IMR-90 (cell line): ENCODE measurements at regions of chr11 and their contacts with region 1.

Region 1: GRCh38 chr11:27485930-27486773 is 13.6 kb upstream of the LGR4 start:
- DNase-seq: peak; percentile 61
- ATAC-seq: peak; percentile 81; the same call in 1 of the 2 replicates
- H3K4me3 ChIP-seq: no peak overlapping the region
- H3K27ac ChIP-seq: no peak overlapping the region
- H3K4me1 ChIP-seq: no peaks in the 10 kb centered on the region
- H3K27me3 ChIP-seq: no peaks in the 10 kb centered on the region
- CTCF ChIP-seq: peak; percentile 99
- POLR2A ChIP-seq: peak; percentile 36; the same call in 1 of the 2 replicates
- RAD21 ChIP-seq: peak; percentile 98

Region 2: DNA sequence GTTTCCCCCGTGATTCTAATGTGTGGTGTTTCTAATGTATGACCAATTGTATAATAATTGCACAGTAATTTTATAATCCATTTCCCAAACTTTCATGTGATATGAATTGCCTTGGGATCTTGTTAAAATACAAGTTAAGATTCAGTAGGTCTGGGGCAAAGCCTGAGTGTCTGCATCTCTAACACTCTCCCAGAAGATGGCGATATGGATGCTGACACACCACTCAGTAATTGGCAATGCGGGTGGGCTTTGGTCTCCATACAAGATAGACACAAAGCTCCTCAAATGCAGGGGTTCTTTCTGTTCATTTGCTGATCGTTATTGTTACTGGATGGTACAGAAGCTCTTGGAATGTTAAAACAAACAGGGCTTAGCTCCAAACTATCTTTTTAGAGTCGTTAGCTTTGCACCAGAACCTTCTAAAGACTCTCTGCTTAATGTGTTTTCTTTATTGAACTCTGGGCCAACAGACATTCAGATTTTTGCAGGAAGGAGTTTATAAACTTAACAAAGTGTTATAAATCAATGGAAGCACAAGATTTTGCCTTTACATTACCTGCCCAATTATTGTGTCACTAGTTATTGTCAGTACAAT is 1199.6 kb before region 1 on chr11:
- CTCF ChIA-PET with region 1: no interaction called
- POLR2A ChIA-PET with region 1: no interaction called
- dilution Hi-C with region 1: no loop called
- in situ Hi-C with region 1: no loop called
- intact Hi-C with region 1: loop called (anchors 10 kb)
- DNase-seq: peak; percentile 37
- ATAC-seq: peak; percentile 83
- H3K4me3 ChIP-seq: no peak overlapping the region; the same call in 1 of the 2 replicates
- H3K27ac ChIP-seq: no peak overlapping the region
- H3K4me1 ChIP-seq: no peaks in the 10 kb centered on the region
- H3K27me3 ChIP-seq: no peaks in the 10 kb centered on the region
- CTCF ChIP-seq: peak; percentile 44
- POLR2A ChIP-seq: no peak
- RAD21 ChIP-seq: no peak

Region 3: DNA sequence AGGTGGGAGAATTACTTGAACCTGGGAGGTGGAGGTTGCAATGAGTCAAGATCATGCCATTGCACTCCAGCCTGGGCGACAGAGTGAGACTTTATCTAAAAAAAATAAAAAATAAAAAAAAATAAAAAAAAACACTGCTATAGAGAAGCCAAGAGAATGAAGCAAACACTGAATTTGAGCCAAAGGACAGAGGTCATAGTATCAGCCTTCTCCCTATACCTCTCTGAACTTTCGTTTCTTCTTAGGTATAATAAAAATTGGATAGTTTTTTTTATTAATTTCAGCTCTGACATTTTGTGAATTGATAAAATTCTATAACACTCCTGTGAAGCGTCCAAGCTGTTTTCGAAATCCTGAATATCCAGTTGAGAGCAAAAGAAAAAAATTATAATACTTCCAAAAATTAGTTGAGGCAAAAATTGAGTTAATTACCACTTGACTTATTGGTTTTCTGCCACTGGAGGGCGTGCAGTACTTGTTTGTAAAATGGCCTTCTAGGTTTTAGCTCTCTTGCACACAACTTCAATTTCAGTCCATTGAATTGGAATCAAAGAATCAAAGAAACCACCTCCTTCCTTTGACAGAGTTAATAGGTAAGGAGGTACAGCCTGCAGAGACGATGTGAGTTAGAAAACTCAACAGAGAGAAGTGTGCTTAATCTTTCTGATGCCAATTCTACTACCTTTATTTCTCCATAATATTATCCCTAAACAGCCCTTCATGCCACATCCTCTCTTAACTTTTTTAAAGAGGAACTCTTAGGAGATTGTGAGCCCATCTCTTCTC is 302.3 kb before region 1 on chr11:
- CTCF ChIA-PET with region 1: interaction called, 24 read pairs
- POLR2A ChIA-PET with region 1: interaction called, 4 read pairs
- dilution Hi-C with region 1: loop called (anchors 25 kb)
- in situ Hi-C with region 1: no loop called
- intact Hi-C with region 1: loop called (anchors 1 kb)
- DNase-seq: peak; percentile 72
- ATAC-seq: peak; percentile 56; the same call in 1 of the 2 replicates
- H3K4me3 ChIP-seq: no peak overlapping the region
- H3K27ac ChIP-seq: no peak overlapping the region
- H3K4me1 ChIP-seq: no peaks in the 10 kb centered on the region; the same call in 1 of the 2 replicates
- H3K27me3 ChIP-seq: peaks cover 27% of the 10 kb centered on the region
- CTCF ChIP-seq: peak; percentile 92
- POLR2A ChIP-seq: no peak
- RAD21 ChIP-seq: peak; percentile 96

Region 4: DNA sequence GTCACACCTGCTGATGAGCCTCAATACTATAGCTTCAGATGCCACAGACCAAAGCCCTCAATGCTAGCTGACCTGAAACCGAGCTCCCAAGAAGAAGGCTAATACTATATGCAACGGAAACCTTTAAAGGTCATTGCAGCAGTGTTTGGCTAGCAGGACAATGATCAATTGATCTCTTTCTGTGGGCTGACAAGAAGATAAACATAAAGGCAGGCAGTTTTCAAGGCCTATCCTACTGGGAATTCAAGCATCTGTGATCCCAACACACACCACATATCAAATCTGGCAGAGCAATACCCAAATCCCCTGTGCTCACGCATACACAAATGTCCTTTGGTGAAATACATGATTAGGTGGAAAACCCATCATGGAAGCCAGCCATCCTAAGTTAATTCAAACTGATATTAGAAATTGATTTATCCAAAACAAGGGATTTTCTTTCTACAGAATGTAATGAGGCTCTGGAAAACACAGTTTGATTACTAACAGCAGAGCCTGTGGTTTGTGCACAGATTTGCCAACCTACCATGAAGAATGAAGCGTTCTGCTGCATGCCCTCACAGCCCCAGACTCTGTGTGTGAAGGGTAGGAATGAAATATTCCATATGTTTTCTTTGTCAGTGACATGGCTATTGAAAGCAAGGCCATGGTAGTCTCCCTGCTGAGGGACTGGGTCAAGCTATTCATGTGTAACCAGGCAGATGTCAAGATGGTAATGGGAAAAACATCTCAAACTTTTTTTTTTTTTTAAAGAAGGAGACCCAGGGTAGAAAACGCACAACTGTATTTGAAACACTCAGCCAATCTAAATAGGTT is 25.8 kb before region 1 on chr11:
- CTCF ChIA-PET with region 1: interaction called, 11 read pairs
- POLR2A ChIA-PET with region 1: no interaction called
- dilution Hi-C with region 1: no loop called
- in situ Hi-C with region 1: no loop called
- intact Hi-C with region 1: no loop called
- DNase-seq: no peak
- ATAC-seq: peak; percentile 31
- H3K4me3 ChIP-seq: no peak overlapping the region
- H3K27ac ChIP-seq: no peak overlapping the region
- H3K4me1 ChIP-seq: peaks cover 6% of the 10 kb centered on the region; the same call in 1 of the 2 replicates
- H3K27me3 ChIP-seq: no peaks in the 10 kb centered on the region
- CTCF ChIP-seq: no peak
- POLR2A ChIP-seq: no peak
- RAD21 ChIP-seq: no peak